Right cardiac atrium (tissue), 5 donors: ENCODE measurements at regions of chr1 and their contacts with region 1.

Region 1: DNA sequence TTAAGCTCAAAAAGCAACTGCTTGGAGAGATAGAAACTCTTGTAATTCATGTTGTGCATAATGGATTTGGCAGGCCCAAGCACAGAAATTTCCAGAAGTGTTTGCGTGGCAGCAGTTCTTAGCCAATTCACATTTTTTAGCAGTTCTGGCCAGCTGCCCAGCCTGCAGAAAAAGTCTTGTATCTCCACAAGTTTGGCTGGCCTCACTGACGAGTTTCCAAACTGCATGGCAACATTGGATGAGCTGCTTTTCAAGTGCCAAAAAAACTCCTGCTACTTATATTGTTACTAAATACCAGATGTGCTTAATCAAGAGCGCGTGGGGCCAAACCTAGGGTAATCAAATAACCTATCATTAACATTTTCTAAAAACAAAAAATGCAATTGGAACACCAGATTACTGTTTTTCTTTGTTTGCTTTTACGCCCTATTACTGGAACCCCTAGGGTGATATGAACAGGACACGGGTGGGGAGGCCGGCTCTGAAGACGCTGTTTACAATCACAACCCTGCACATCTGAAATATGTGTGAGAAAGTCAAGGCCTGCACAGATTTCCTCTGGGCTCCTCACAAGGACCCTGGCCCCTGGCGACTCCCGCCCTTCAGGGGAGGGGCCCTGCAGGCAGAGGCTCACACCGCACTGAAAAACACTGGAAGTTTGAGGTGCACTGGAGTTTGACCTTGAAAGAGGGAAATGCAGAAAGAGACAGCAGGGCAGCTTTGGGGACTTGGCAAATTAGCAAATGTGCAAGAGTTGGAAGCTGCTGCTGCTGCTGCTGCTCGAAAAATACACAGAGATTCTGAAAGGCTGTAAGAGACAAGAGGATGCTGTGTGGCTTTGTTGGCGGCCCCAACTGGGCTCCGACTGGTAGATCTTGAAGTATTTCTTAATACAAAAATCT is 55.2 kb upstream of the TARBP1 start:
- DNase-seq: peak; percentile 96 to 98 (median 96)
- ATAC-seq: peak; percentile 28 to 34
- H3K4me3 ChIP-seq: no peak overlapping the region
- H3K27ac ChIP-seq: peak overlapping the region; percentile 100
- H3K4me1 ChIP-seq: peaks cover 50% of the 10 kb centered on the region
- H3K27me3 ChIP-seq: no peaks in the 10 kb centered on the region

Region 2: GRCh38 chr1:234579967-234580366 is 45.7 kb after region 1 on chr1:
- intact Hi-C with region 1: loop called in 1 of 4 experiments (anchors 10 kb)
- DNase-seq: no peak
- ATAC-seq: no peak
- H3K4me3 ChIP-seq: no peak overlapping the region
- H3K27ac ChIP-seq: no peak overlapping the region
- H3K4me1 ChIP-seq: peaks cover 5% of the 10 kb centered on the region
- H3K27me3 ChIP-seq: no peaks in the 10 kb centered on the region

Region 3: GRCh38 chr1:234617131-234617985 is 83.1 kb after region 1 on chr1:
- intact Hi-C with region 1: no loop called
- DNase-seq: no peak
- ATAC-seq: no peak
- H3K4me3 ChIP-seq: no peak overlapping the region
- H3K27ac ChIP-seq: no peak overlapping the region
- H3K4me1 ChIP-seq: no peaks in the 10 kb centered on the region
- H3K27me3 ChIP-seq: no peaks in the 10 kb centered on the region

Region 4: DNA sequence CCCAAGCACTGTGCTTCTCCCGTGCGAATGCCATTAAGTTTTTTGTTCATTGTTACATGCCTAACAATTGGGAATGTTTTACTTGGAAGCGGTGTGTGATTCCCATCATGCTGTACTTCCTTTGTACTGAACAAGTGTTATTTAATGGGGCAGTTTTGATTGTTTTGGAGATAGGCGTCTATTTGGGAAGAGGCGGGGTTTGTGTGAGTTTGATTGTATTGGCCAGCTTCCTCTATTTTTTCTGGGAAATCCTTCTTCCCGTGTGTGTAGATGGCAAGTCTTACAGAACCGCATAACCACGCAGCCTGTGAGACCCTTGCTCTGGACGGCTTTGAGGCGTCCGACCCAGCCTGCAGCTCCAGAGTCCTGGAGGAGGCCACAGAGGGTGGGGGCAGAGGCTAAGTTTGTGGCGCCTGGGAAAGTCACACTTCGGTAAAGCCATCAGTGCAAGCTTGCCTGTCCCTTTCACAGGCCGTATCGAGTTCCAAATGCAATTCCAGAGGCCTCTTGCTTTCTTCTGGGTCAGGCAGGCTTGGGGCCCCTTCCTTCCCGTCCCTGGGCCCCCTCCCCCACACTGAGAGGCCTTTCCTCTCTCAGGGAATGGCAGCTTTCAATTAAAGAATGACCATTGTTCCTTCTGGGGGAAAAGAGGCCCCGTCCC is 384.1 kb after region 1 on chr1:
- intact Hi-C with region 1: loop called in 1 of 4 experiments (anchors 10 kb)
- DNase-seq: peak; percentile 62 to 80 (median 78)
- ATAC-seq: peak; percentile 63 to 84
- H3K4me3 ChIP-seq: no peak overlapping the region
- H3K27ac ChIP-seq: peak overlapping the region; percentile 84
- H3K4me1 ChIP-seq: peaks cover 27% of the 10 kb centered on the region
- H3K27me3 ChIP-seq: no peaks in the 10 kb centered on the region

Region 5: GRCh38 chr1:234997201-234997895 is 463.1 kb after region 1 on chr1:
- intact Hi-C with region 1: loop called in 1 of 4 experiments (anchors 10 kb)
- DNase-seq: peak; percentile 99
- ATAC-seq: peak; percentile 95 to 96
- H3K4me3 ChIP-seq: no peak overlapping the region
- H3K27ac ChIP-seq: peak overlapping the region; percentile 99
- H3K4me1 ChIP-seq: peaks cover 9% of the 10 kb centered on the region
- H3K27me3 ChIP-seq: no peaks in the 10 kb centered on the region